CD4-positive, alpha-beta T cell (primary cell): ENCODE measurements at regions of chr22 and their contacts with region 1.

Region 1: DNA sequence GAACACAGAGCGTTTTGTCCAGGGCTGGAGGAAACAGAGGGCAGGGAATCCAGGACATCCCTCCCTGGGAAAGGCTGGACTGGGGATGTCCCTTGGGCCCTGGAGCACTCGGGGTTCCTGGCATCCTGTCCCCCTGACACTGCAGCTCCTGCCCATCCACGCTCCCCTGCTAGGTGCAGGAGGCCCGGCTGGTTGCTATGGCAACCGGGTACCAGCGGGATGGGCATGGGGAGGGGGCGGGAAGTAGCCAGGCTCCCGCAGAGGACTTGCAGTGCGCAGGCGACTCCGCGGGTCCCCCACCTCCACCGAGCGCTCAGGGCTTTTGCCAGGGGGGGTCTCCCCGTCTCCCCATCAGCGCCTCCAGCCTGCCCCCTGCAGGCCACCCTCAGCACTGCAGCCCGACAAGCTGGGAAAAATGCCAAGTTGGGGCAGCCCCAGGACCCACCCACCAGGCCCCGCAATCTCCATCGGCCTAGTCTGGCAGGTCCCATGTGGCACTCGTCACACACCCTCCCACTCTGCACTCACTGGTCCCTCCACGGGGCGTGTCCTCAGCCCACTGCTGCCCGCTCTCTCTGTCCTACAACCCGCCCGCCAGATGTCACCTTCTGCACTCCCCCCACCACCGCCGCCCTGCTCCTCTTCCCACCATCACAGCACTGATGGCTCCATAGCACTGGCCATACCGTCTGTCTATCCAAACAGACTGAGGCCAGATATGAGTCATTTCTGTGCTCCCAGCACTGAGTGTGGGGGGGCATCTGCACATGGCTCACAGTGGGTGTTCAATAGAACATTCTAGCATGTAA is 31.5 kb downstream of the KIAA0930 start:
- DNase-seq: peak in 11 of 14 experiments; percentile 9 to 59 (median 25)
- ATAC-seq: peak; percentile 48
- H3K4me3 ChIP-seq: no peak overlapping the region
- H3K4me3 Mint-ChIP-seq: no peak overlapping the region
- H3K27ac ChIP-seq: no peak overlapping the region
- H3K27ac Mint-ChIP-seq: no peak overlapping the region
- H3K4me1 ChIP-seq: no peaks in the 10 kb centered on the region
- H3K4me1 Mint-ChIP-seq: no peaks in the 10 kb centered on the region
- H3K27me3 ChIP-seq: no peaks in the 10 kb centered on the region
- H3K27me3 Mint-ChIP-seq: no peaks in the 10 kb centered on the region
- CTCF ChIP-seq: peak; percentile 55

Region 2: GRCh38 chr22:44819971-44820631 is 389.1 kb before region 1 on chr22:
- CTCF ChIA-PET with region 1: no interaction called
- POLR2A ChIA-PET with region 1: no interaction called
- intact Hi-C with region 1: loop called in 1 of 2 experiments (anchors 5 kb)
- DNase-seq: no peak
- ATAC-seq: no peak
- H3K4me3 ChIP-seq: no peak overlapping the region
- H3K4me3 Mint-ChIP-seq: no peak overlapping the region
- H3K27ac ChIP-seq: no peak overlapping the region
- H3K27ac Mint-ChIP-seq: no peak overlapping the region
- H3K4me1 ChIP-seq: peaks cover 5% of the 10 kb centered on the region
- H3K4me1 Mint-ChIP-seq: no peaks in the 10 kb centered on the region
- H3K27me3 ChIP-seq: no peaks in the 10 kb centered on the region
- H3K27me3 Mint-ChIP-seq: peaks cover 5% of the 10 kb centered on the region
- CTCF ChIP-seq: no peak

Region 3: DNA sequence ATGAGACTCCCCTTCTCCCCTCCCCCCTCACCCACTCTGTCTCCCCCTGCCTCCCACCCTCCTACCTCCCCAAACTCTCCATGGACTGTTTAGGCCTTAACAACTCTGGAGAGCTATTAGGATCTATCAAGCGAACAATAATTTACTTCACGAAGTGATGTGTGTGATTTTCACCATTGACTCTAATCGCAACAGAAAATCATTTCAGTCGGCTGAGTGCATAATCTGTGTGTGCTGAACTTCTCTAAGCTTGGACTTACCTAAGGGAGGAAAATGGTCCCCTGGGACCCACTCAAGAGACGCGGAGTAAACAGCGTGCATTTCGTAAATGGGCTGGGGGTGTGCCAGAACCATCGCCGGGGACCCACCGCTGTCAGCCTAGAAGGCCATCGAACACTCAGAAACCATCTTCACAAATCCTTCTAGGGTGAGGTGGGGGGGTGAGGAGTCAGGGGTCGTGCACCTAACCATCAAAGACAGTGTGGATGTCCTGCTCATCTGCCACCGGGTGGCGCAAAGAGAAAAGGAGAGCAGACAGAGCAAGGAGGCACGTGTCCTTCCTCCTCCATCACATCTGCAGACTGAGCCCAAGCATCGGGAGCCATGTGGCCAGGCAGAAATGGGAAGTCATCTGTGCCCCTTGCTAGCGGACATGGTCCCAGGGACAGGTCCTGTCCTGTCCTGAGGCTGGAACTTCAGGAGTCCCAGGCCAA is 107.5 kb before region 1 on chr22:
- CTCF ChIA-PET with region 1: interaction called, 3 read pairs
- POLR2A ChIA-PET with region 1: no interaction called
- intact Hi-C with region 1: loop called in 1 of 2 experiments (anchors 2 kb)
- DNase-seq: peak in 10 of 14 experiments; percentile 1 to 68 (median 17)
- ATAC-seq: peak; percentile 73
- H3K4me3 ChIP-seq: no peak overlapping the region
- H3K4me3 Mint-ChIP-seq: no peak overlapping the region
- H3K27ac ChIP-seq: no peak overlapping the region
- H3K27ac Mint-ChIP-seq: no peak overlapping the region
- H3K4me1 ChIP-seq: peaks cover 5% of the 10 kb centered on the region
- H3K4me1 Mint-ChIP-seq: no peaks in the 10 kb centered on the region
- H3K27me3 ChIP-seq: peaks cover 5 to 6% of the 10 kb centered on the region in 2 experiments
- H3K27me3 Mint-ChIP-seq: peaks cover 32% of the 10 kb centered on the region
- CTCF ChIP-seq: no peak

Region 4: DNA sequence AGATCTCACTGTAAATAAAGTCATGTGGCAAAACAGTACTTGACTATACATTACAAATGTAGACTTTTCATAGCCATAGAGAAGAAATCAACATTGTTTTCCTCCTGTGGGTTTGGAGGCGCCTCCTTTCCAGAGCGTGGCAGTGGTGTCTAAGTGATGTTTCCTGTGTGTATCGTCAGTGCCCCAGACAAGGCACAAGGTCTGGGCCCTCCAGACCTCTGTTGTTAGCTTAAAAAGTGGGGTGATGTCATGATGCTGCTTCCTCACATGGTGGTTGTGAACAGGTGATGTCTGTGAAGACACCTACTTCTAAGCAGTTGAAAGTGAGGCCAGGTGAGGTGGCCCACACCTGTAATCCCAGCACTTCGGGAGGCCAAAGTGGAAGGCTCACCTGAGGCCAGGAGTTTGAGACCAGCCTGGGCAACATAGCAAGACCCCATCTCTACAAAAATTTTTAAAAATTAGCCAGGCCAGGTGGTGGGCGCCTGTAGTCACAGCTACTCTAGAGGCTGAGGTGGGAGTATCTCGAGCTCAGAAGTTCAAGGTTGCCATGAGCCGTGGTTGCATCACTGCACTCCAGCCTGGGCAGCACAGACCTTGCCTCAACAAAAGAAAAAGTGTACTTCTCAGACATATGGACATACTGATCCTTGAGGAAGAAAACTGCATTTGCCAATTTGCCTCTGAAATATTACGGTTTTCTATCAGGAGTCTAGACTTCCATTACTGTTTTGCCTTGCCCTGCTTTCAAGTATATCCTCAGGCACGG is 29.7 kb before region 1 on chr22:
- CTCF ChIA-PET with region 1: interaction called, 8 read pairs
- POLR2A ChIA-PET with region 1: no interaction called
- intact Hi-C with region 1: loop called in 1 of 2 experiments (anchors 2 kb)
- DNase-seq: peak in 12 of 14 experiments; percentile 22 to 79 (median 50)
- ATAC-seq: peak; percentile 97
- H3K4me3 ChIP-seq: no peak overlapping the region
- H3K4me3 Mint-ChIP-seq: peak overlapping the region; percentile 53
- H3K27ac ChIP-seq: peak overlapping the region; percentile 3 to 66
- H3K27ac Mint-ChIP-seq: peak overlapping the region; percentile 87
- H3K4me1 ChIP-seq: peaks cover 38% of the 10 kb centered on the region
- H3K4me1 Mint-ChIP-seq: peaks cover 64% of the 10 kb centered on the region
- H3K27me3 ChIP-seq: no peaks in the 10 kb centered on the region
- H3K27me3 Mint-ChIP-seq: no peaks in the 10 kb centered on the region
- CTCF ChIP-seq: peak; percentile 21

Region 5: GRCh38 chr22:45226527-45227186 is 17.5 kb after region 1 on chr22:
- CTCF ChIA-PET with region 1: no interaction called
- POLR2A ChIA-PET with region 1: no interaction called
- intact Hi-C with region 1: no loop called
- DNase-seq: peak in 2 of 14 experiments; percentile 59 to 70
- ATAC-seq: no peak
- H3K4me3 ChIP-seq: no peak overlapping the region
- H3K4me3 Mint-ChIP-seq: no peak overlapping the region
- H3K27ac ChIP-seq: no peak overlapping the region
- H3K27ac Mint-ChIP-seq: no peak overlapping the region
- H3K4me1 ChIP-seq: peaks cover 21% of the 10 kb centered on the region
- H3K4me1 Mint-ChIP-seq: peaks cover 16% of the 10 kb centered on the region
- H3K27me3 ChIP-seq: no peaks in the 10 kb centered on the region
- H3K27me3 Mint-ChIP-seq: no peaks in the 10 kb centered on the region
- CTCF ChIP-seq: no peak

Region 6: GRCh38 chr22:45344334-45344733 is 135.1 kb after region 1 on chr22:
- CTCF ChIA-PET with region 1: no interaction called
- POLR2A ChIA-PET with region 1: no interaction called
- intact Hi-C with region 1: no loop called
- DNase-seq: no peak
- ATAC-seq: no peak
- H3K4me3 ChIP-seq: no peak overlapping the region
- H3K4me3 Mint-ChIP-seq: no peak overlapping the region
- H3K27ac ChIP-seq: no peak overlapping the region
- H3K27ac Mint-ChIP-seq: peak overlapping the region; percentile 10
- H3K4me1 ChIP-seq: peaks cover 19% of the 10 kb centered on the region
- H3K4me1 Mint-ChIP-seq: peaks cover 5% of the 10 kb centered on the region
- H3K27me3 ChIP-seq: no peaks in the 10 kb centered on the region
- H3K27me3 Mint-ChIP-seq: no peaks in the 10 kb centered on the region
- CTCF ChIP-seq: no peak

Region 7: GRCh38 chr22:45397806-45398205 is 188.6 kb after region 1 on chr22:
- CTCF ChIA-PET with region 1: no interaction called
- POLR2A ChIA-PET with region 1: no interaction called
- intact Hi-C with region 1: no loop called
- DNase-seq: peak in 4 of 14 experiments; percentile 11 to 39 (median 18)
- ATAC-seq: no peak
- H3K4me3 ChIP-seq: no peak overlapping the region
- H3K4me3 Mint-ChIP-seq: no peak overlapping the region
- H3K27ac ChIP-seq: no peak overlapping the region
- H3K27ac Mint-ChIP-seq: no peak overlapping the region
- H3K4me1 ChIP-seq: no peaks in the 10 kb centered on the region
- H3K4me1 Mint-ChIP-seq: no peaks in the 10 kb centered on the region
- H3K27me3 ChIP-seq: peaks cover 0 to 4% of the 10 kb centered on the region in 2 experiments
- H3K27me3 Mint-ChIP-seq: peaks cover 12% of the 10 kb centered on the region
- CTCF ChIP-seq: no peak